Left colon (tissue), 2 donors: ENCODE measurements at regions of chr1 and their contacts with region 1.

Region 1: DNA sequence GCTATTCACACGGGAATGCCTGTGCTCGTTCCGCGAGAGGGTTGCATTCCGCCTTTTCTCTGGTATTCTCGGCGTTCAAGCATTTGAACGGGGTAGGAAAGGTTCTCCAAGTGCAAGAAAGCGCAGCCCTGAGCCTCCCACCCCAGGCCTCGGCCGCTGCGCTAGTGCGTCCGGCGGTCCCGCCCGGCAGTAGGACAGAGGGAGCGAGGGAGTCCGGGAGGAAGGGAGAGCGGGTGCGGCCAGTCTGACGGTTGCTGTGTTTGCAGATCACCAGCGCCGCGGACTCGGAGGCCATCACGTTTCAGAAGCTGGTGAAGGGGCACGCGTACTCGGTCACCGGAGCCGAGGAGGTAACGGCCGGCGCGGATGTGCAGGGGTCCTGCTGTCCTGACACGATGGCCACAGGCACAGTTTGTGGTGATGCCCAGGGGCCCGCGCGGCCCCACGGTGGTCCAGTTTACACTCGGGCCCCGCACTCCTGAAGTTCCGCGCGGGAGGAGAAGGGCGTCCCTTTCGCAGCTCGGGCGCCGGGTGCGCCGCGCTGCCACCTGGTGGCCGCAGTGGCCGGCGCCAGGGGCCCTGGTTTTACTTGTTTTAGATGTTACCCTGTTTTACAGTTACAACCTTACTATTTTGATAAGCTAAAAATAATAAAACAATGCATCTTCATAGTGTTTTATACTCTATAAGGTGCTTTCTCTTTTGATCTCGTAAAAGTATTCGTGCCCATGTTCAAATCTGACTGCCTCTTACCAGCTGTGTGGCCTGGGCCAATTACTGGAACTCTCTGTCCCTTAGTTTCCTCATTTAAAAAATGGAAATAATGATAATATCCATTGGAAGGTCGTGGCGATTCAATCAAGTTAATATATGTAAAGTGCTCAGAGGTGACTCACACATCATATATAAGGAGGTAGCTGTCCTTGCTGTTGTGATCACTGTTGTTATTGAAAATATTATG is 36.7 kb downstream of the CAPN2 start:
- DNase-seq: peak; percentile 48 to 73
- ATAC-seq: peak; percentile 80

Region 2: DNA sequence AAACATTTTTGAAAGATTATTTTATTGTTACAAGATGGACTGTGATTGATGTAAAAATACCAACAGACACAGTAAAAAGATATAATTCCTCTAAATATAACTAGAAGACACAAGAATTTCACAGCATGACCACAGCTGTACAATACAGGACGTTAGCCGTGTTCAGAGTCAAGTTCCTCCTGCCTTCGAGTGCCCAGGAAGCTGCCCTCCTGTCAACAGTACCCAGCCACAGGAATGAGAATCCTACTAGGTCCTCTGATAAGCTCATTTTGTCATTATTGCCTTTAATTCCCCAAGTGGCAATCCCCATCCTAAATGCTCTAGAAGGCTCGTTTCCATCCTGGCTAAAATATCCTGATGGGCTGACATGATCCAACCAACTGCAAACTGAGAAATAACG is 53.1 kb before region 1 on chr1:
- intact Hi-C with region 1: loop called in 1 of 2 experiments (anchors 5 kb)
- DNase-seq: no peak
- ATAC-seq: no peak

Region 3: GRCh38 chr1:223712194-223712849 is 36.7 kb before region 1 on chr1 and contains the start of gene CAPN2:
- intact Hi-C with region 1: loop called (anchors 5 kb)
- DNase-seq: peak; percentile 75 to 87
- ATAC-seq: peak; percentile 78
- total RNA-seq, gene CAPN2: 301 to 355 TPM

Region 4: DNA sequence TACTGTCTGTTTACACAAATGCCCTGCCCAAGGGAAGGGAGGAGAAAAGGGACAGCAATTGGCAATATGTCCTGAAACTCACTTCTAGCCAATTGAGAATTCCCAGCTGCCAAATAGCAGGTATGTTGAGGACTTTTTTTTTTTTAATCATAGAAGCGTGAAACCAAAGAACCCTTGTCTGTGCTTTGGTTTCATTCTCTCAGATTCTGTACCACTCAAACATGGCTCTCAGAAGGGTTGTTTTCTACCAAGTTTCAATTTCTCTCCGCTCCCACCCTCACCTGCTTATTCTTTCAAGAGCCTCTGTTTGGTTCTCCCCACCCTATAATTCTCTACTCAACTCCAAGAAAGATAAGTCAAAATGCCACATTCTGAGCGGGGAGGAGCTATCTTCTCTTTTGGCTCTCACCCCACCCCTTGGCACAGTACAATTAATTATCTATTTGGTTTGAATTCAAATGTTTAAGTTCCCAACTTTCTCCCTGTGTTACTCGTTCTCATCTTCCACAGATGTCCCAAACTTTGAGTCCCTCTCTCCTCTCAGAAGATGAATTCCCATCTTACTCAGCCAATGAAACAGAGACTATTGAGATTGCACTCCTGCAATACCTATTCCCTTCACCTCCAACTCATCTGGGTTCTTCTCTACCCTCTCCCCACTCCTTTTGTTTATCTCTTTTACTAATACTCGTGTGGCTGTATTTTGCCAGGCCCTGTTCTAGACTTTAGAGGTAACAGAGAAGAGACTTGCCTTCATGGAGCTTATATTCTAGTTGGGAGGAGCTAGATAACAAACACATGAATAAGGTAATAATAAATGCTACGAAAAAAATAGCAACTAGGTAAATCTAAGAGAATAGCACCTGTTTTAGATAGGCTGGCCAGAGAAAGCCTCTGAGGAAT is 100.5 kb after region 1 on chr1:
- intact Hi-C with region 1: no loop called
- DNase-seq: no peak
- ATAC-seq: no peak

Region 5: GRCh38 chr1:224411766-224412165 is 662.7 kb after region 1 on chr1:
- intact Hi-C with region 1: no loop called
- DNase-seq: no peak
- ATAC-seq: no peak